ENCODE measurements at regions of chr19 and their contacts with region 1.

Region 1: DNA sequence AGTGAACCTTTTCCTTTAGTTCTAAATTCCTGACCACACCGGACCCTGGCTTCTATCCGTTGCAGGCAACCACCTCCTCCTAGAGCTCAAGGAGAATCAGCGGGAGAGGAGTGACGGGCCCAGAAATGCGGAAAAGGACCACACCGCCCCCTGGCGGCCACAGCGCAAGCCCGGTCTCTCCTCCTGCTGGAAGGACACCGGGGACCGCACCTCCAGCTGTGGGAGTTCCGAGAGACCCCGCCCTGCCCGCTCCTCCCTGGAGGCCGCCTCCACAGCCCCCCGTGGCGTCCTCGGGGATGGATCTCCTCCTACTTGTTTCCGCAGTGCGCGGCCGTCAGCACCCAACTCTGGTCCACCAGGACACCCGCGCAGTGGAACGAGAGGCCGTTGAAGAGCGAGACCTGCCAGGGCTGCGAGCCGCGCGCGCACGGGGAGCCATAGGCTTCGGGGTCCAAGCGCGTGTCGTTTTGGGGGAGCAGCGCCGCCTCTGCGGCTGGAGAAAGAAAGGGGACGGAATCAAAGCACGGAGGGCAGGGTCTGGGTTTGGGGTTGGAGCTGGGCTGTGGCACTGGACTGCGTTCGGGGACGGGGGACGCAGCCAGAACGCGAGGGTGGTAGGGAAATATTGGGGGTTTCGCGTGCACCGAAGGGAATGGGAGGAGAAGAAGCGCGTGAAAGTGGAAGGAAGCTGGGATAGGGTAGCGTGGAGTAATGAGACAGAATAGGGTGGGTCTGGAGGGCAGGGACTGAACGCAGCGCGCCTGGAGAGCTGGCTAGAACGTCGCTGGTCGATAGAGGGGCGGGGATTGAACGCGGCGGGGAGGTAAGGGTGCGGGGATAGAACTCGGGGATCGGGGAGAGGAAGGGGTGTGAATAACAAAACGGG is 2.5 kb downstream of the KLK10 start:
- DNase-seq: peak; percentile 72 to 93 (median 84)
- H3K4me3 ChIP-seq: peak overlapping the region; percentile 45
- H3K27ac ChIP-seq: peak overlapping the region; percentile 59 to 94
- H3K4me1 ChIP-seq: peaks cover 3% of the 10 kb centered on the region
- H3K27me3 ChIP-seq: no peaks in the 10 kb centered on the region
- CTCF ChIP-seq: peak; percentile 59 to 86 (median 83)
- EP300 ChIP-seq: no peak
- POLR2A ChIP-seq: peak; percentile 56

Region 2: GRCh38 chr19:50639121-50640112 is 377.6 kb before region 1 on chr19 and contains the start of gene SYT3:
- intact Hi-C with region 1: no loop called
- DNase-seq: peak in 1 of 5 donors; percentile 28
- H3K4me3 ChIP-seq: no peak within 1 kb of the TSS
- H3K27ac ChIP-seq: no peak within 1 kb of the TSS
- H3K4me1 ChIP-seq: no peaks in the 10 kb centered on the region
- H3K27me3 ChIP-seq: no peaks in the 10 kb centered on the region
- CTCF ChIP-seq: no peak
- EP300 ChIP-seq: no peak
- POLR2A ChIP-seq: no peak
- total RNA-seq, gene SYT3: 0.08 TPM in 1 of 7 donors, not detected in the others

Region 3: GRCh38 chr19:50933640-50934039 is 83.4 kb before region 1 on chr19:
- intact Hi-C with region 1: loop called in 1 of 4 experiments (anchors 5 kb)
- DNase-seq: no peak
- H3K4me3 ChIP-seq: no peak overlapping the region
- H3K27ac ChIP-seq: no peak overlapping the region
- H3K4me1 ChIP-seq: no peaks in the 10 kb centered on the region
- H3K27me3 ChIP-seq: no peaks in the 10 kb centered on the region
- CTCF ChIP-seq: no peak
- EP300 ChIP-seq: no peak
- POLR2A ChIP-seq: no peak

Region 4: GRCh38 chr19:50969411-50969756 is 47.7 kb before region 1 on chr19 and contains the start of gene KLK6:
- intact Hi-C with region 1: no loop called
- DNase-seq: no peak
- H3K4me3 ChIP-seq: no peak within 1 kb of the TSS
- H3K27ac ChIP-seq: no peak within 1 kb of the TSS
- H3K4me1 ChIP-seq: no peaks in the 10 kb centered on the region
- H3K27me3 ChIP-seq: no peaks in the 10 kb centered on the region
- CTCF ChIP-seq: no peak
- EP300 ChIP-seq: no peak
- POLR2A ChIP-seq: no peak
- total RNA-seq, gene KLK6: 0.24 to 21.7 (median 3.3) TPM in 5 of 7 donors, not detected in the others

Region 5: DNA sequence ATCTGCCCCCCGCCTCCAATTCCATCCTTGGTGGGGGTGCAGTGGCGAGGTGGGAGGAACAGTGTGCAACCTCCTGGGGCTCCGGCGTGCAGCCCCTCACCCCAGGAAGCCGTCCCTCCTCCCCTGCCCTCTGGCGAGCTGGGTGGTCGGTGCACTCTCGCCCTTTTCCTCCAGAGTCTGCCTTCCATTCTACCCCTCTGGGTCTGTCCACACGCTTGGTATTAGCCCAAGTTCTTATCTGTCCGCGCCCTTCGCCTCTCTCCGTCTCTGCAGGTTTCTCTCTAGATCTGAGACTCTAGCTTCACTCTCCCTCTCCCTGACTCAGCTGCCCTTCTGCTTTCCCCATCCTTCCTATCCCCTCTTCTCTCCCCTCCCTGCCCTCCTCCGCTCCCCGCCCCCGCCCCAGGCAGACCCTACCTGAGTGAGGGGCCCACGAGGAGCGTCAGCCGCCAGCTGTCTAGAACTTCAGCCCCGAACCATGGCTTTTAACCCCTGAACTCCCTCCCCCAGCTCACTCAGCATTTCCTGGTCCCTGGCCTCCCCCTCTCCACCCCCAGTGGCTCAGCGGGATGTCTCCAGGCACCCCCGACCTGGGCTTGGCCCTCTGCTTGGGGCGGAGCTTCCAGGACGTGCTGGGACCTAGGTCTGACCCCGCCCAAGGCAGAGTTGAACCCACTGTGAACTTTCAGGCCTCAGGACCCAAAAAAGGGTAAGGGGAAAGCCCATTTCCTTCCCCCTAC is 48.4 kb after region 1 on chr19:
- intact Hi-C with region 1: no loop called
- DNase-seq: no peak
- H3K4me3 ChIP-seq: no peak overlapping the region
- H3K27ac ChIP-seq: no peak overlapping the region
- H3K4me1 ChIP-seq: peaks cover 3% of the 10 kb centered on the region
- H3K27me3 ChIP-seq: no peaks in the 10 kb centered on the region
- CTCF ChIP-seq: no peak
- EP300 ChIP-seq: no peak
- POLR2A ChIP-seq: no peak

Region 6: DNA sequence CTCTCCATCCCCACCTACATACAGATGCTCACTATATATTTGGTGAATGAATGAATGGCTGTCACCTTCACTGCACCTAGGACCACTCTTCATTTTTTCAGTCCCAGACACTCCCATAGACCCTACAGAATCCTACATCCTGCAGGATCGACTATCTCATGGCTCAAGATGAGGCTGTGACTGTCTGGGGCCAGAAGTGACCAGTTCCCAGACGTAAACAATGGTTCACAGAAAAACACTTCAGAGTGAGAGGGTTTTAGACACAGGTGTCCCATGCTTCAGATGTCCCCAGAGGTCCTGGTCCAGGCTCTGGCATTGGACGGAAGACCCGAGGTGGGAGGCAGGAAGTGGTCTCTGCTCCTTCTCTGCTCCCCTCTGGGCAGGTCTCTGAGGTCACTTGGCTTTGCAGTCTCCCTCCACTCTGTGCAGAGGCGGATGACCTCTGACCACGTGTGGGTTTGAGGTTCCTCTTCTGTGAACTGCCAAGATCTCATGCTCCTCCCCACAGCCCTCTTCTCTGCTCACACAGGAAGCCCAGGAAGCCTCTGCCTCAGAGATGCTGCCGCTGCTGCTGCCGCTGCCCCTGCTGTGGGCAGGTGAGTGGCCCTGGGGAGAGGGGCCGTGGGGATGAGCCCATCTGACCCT is 149.9 kb after region 1 on chr19:
- intact Hi-C with region 1: loop called in 1 of 4 experiments (anchors 5 kb)
- DNase-seq: no peak
- H3K4me3 ChIP-seq: no peak overlapping the region
- H3K27ac ChIP-seq: no peak overlapping the region
- H3K4me1 ChIP-seq: peaks cover 9% of the 10 kb centered on the region
- H3K27me3 ChIP-seq: no peaks in the 10 kb centered on the region
- CTCF ChIP-seq: no peak
- EP300 ChIP-seq: no peak
- POLR2A ChIP-seq: no peak

Region 7: DNA sequence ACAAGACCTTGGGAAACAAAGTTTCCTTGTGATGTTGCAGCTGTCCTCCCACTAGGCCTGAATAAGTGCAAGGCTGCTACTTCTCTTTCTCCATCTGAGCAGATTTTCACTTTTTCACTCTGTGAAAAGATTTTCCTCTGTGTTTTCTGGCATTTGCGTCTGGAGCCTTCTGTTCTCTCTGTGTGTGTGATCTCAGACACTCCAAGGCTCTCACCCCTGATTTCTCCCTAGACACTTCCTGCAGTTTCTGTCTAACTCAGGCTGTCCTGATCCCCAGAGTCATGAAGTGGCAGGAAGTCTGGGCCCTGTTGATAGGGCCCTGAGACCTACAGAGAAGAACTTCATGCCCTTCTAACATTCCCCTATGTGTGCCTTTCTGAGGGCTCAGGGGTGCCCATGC is 162.2 kb after region 1 on chr19:
- intact Hi-C with region 1: loop called in 1 of 4 experiments (anchors 5 kb)
- DNase-seq: no peak
- H3K4me3 ChIP-seq: no peak overlapping the region
- H3K27ac ChIP-seq: no peak overlapping the region
- H3K4me1 ChIP-seq: no peaks in the 10 kb centered on the region
- H3K27me3 ChIP-seq: no peaks in the 10 kb centered on the region
- CTCF ChIP-seq: no peak
- EP300 ChIP-seq: no peak
- POLR2A ChIP-seq: no peak